ENCODE measurements at regions of chr19 and their contacts with region 1.

Region 1: GRCh38 chr19:5904352-5905113 is at the start of gene VMAC:
- DNase-seq: peak; percentile 99 to 100
- ATAC-seq: peak; percentile 73 to 89 (median 77)
- H3K4me3 ChIP-seq: peak within 1 kb of the TSS; percentile 97
- H3K4me3 Mint-ChIP-seq: peak within 1 kb of the TSS; percentile 100
- H3K27ac ChIP-seq: peak within 1 kb of the TSS; percentile 93
- H3K27ac Mint-ChIP-seq: peak within 1 kb of the TSS; percentile 98 to 99
- H3K4me1 ChIP-seq: peaks cover 35% of the 10 kb centered on the region
- H3K4me1 Mint-ChIP-seq: peaks cover 23 to 42% of the 10 kb centered on the region in 2 donors
- H3K27me3 ChIP-seq: no peaks in the 10 kb centered on the region
- H3K27me3 Mint-ChIP-seq: no peaks in the 10 kb centered on the region
- CTCF ChIP-seq: no peak
- total RNA-seq, gene VMAC: 21.1 to 26.3 (median 24.2) TPM

Region 2: GRCh38 chr19:4723367-4724187 is 1181.0 kb before region 1 on chr19 and contains the start of gene DPP9:
- intact Hi-C with region 1: loop called (anchors 5 kb)
- DNase-seq: peak; percentile 91 to 99
- ATAC-seq: peak; percentile 94 to 99 (median 94)
- H3K4me3 ChIP-seq: peak within 1 kb of the TSS; percentile 98
- H3K4me3 Mint-ChIP-seq: peak within 1 kb of the TSS; percentile 95
- H3K27ac ChIP-seq: peak within 1 kb of the TSS; percentile 77
- H3K27ac Mint-ChIP-seq: peak within 1 kb of the TSS; percentile 98
- H3K4me1 ChIP-seq: peaks cover 34% of the 10 kb centered on the region
- H3K4me1 Mint-ChIP-seq: peaks cover 32 to 55% of the 10 kb centered on the region in 2 donors
- H3K27me3 ChIP-seq: no peaks in the 10 kb centered on the region
- H3K27me3 Mint-ChIP-seq: peaks cover 0 to 3% of the 10 kb centered on the region in 2 donors
- CTCF ChIP-seq: no peak
- total RNA-seq, gene DPP9: 133 to 183 (median 165) TPM

Region 3: DNA sequence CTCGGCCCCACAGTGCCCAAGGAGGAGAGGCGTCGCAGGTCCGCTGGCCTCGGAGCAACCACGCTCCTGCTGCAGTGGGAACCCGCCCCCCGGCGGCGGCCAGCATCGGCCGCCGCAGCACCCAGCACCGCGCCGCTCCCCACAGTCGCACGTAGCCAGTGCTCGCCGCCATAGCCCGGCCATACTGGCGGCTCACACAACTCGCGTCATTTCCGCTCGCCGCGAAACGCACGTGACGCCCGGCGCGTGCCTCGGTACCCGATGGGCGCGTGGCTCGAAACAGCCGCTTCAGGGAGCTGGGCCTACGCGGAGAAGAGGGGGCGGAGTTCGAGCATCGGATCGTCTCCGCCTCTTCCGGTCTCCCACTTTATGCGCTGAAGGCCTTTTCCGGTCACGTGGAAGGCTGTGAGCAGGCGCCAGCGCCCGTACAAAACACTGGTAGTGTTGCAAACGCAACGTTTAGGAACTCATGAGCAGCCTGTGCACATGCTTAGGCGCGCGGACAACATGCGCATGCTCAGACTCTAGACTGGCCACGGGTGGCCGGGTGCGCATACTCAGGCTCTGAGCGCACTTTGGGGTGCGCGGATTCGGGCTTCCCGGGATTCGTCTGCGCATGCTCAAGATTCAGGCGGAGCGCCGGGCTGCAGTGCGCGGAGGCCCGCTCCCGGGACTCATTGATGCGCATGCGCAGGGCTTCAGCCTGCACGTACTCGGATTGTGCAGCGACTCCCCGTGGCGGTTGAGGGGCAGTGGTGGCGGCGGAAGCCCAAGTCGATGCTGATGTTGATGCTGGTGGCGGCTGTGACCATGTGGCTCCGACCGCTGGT is 184.4 kb before region 1 on chr19 and contains the starts of genes CATSPERD and LONP1:
- intact Hi-C with region 1: loop called (anchors 1 kb)
- DNase-seq: peak; percentile 96 to 100
- ATAC-seq: peak; percentile 87 to 96 (median 87)
- H3K4me3 ChIP-seq: peak within 1 kb of the TSS; percentile 68
- H3K4me3 Mint-ChIP-seq: peak within 1 kb of the TSS; percentile 89
- H3K27ac ChIP-seq: peak within 1 kb of the TSS; percentile 82
- H3K27ac Mint-ChIP-seq: peak within 1 kb of the TSS; percentile 92 to 95
- H3K4me1 ChIP-seq: peaks cover 31% of the 10 kb centered on the region
- H3K4me1 Mint-ChIP-seq: peaks cover 10 to 23% of the 10 kb centered on the region in 2 donors
- H3K27me3 ChIP-seq: no peaks in the 10 kb centered on the region
- H3K27me3 Mint-ChIP-seq: peaks cover 0 to 2% of the 10 kb centered on the region in 2 donors
- CTCF ChIP-seq: peak; percentile 67
- total RNA-seq, gene CATSPERD: not detected
- total RNA-seq, gene LONP1: 50.5 to 61.8 (median 56.1) TPM

Region 4: GRCh38 chr19:5790573-5791520 is 113.7 kb before region 1 on chr19 and contains the start of gene DUS3L:
- intact Hi-C with region 1: loop called (anchors 1 kb)
- DNase-seq: peak; percentile 95 to 98
- ATAC-seq: peak; percentile 90 to 98 (median 92)
- H3K4me3 ChIP-seq: peak within 1 kb of the TSS; percentile 96
- H3K4me3 Mint-ChIP-seq: peak within 1 kb of the TSS; percentile 100
- H3K27ac ChIP-seq: peak within 1 kb of the TSS; percentile 99
- H3K27ac Mint-ChIP-seq: peak within 1 kb of the TSS; percentile 100
- H3K4me1 ChIP-seq: peaks cover 18% of the 10 kb centered on the region
- H3K4me1 Mint-ChIP-seq: peaks cover 14 to 22% of the 10 kb centered on the region in 2 donors
- H3K27me3 ChIP-seq: no peaks in the 10 kb centered on the region
- H3K27me3 Mint-ChIP-seq: peaks cover 0 to 3% of the 10 kb centered on the region in 2 donors
- CTCF ChIP-seq: no peak
- total RNA-seq, gene DUS3L: 116 to 140 (median 128) TPM

Region 5: GRCh38 chr19:5803752-5804515 is 100.6 kb before region 1 on chr19:
- intact Hi-C with region 1: loop called (anchors 1 kb)
- DNase-seq: peak; percentile 85 to 96
- ATAC-seq: peak; percentile 92 to 95 (median 94)
- H3K4me3 ChIP-seq: no peak overlapping the region
- H3K4me3 Mint-ChIP-seq: peak overlapping the region; percentile 78
- H3K27ac ChIP-seq: no peak overlapping the region
- H3K27ac Mint-ChIP-seq: peak overlapping the region; percentile 74 to 91
- H3K4me1 ChIP-seq: peaks cover 27% of the 10 kb centered on the region
- H3K4me1 Mint-ChIP-seq: peaks cover 12 to 19% of the 10 kb centered on the region in 2 donors
- H3K27me3 ChIP-seq: peaks cover 39% of the 10 kb centered on the region
- H3K27me3 Mint-ChIP-seq: peaks cover 7 to 50% of the 10 kb centered on the region in 2 donors
- CTCF ChIP-seq: peak; percentile 87

Region 6: DNA sequence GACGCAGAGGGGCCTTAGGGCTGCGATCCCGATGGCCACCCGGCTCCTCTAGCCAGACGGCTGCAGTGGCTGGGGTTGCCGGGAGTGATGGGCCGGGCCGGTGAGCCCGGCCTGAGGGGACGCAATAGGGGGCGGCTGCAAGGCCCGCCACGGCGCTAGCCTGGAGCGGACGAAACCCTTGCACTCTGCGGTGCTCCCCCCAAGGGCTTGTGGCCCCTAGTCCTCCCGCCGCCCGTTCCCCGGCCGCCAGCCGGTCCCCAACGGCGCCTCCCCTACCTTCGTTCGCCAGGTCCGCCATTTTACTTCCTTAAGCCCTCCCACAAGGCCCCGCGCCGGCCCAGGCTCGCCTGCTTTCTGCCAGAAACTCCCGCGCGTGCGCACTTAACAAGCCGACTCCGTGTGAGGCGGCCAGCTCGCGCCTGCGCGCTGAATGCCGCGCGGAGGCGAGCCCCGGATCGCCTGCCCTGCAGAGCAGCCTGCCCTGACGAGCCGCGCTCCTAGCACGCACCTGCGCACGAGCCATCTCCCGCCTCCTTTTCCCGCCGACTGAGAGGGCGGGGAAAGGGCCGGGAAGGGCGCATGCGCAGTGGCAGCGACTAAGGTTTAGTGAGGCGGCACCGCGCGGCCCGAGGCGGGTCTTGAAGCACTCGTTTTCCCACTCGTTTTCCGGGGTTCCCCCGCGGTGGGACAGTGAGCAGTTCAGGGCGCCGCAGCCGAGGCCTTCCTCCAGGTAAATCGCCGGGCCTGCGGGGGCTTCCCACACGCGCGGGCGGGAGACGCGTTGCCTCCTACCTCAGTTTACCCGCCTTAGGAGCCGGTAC is 73.5 kb after region 1 on chr19 and contains the start of gene RANBP3:
- intact Hi-C with region 1: loop called (anchors 5 kb)
- DNase-seq: peak; percentile 95 to 100
- ATAC-seq: peak; percentile 90 to 96 (median 91)
- H3K4me3 ChIP-seq: peak within 1 kb of the TSS; percentile 53
- H3K4me3 Mint-ChIP-seq: peak within 1 kb of the TSS; percentile 99
- H3K27ac ChIP-seq: peak within 1 kb of the TSS; percentile 64
- H3K27ac Mint-ChIP-seq: peak within 1 kb of the TSS; percentile 92 to 98
- H3K4me1 ChIP-seq: peaks cover 34% of the 10 kb centered on the region
- H3K4me1 Mint-ChIP-seq: peaks cover 47 to 50% of the 10 kb centered on the region in 2 donors
- H3K27me3 ChIP-seq: no peaks in the 10 kb centered on the region
- H3K27me3 Mint-ChIP-seq: no peaks in the 10 kb centered on the region
- CTCF ChIP-seq: no peak
- total RNA-seq, gene RANBP3: 73.9 to 95.2 (median 89.7) TPM

Region 7: GRCh38 chr19:6325614-6326013 is 421.1 kb after region 1 on chr19:
- intact Hi-C with region 1: no loop called
- DNase-seq: no peak
- ATAC-seq: no peak
- H3K4me3 ChIP-seq: no peak overlapping the region
- H3K4me3 Mint-ChIP-seq: no peak overlapping the region
- H3K27ac ChIP-seq: no peak overlapping the region
- H3K27ac Mint-ChIP-seq: no peak overlapping the region
- H3K4me1 ChIP-seq: no peaks in the 10 kb centered on the region
- H3K4me1 Mint-ChIP-seq: no peaks in the 10 kb centered on the region
- H3K27me3 ChIP-seq: no peaks in the 10 kb centered on the region
- H3K27me3 Mint-ChIP-seq: peaks cover 7 to 12% of the 10 kb centered on the region in 2 donors
- CTCF ChIP-seq: no peak

Region 8: GRCh38 chr19:6372594-6373095 is 468.1 kb after region 1 on chr19 and contains the start of gene ALKBH7:
- intact Hi-C with region 1: loop called (anchors 2 kb)
- DNase-seq: peak; percentile 92 to 100
- ATAC-seq: peak; percentile 77 to 89 (median 80)
- H3K4me3 ChIP-seq: peak within 1 kb of the TSS; percentile 79
- H3K4me3 Mint-ChIP-seq: peak within 1 kb of the TSS; percentile 91
- H3K27ac ChIP-seq: peak within 1 kb of the TSS; percentile 97
- H3K27ac Mint-ChIP-seq: peak within 1 kb of the TSS; percentile 88 to 97
- H3K4me1 ChIP-seq: peaks cover 15% of the 10 kb centered on the region
- H3K4me1 Mint-ChIP-seq: peaks cover 15 to 25% of the 10 kb centered on the region in 2 donors
- H3K27me3 ChIP-seq: no peaks in the 10 kb centered on the region
- H3K27me3 Mint-ChIP-seq: no peaks in the 10 kb centered on the region
- CTCF ChIP-seq: no peak
- total RNA-seq, gene ALKBH7: 23.7 to 30.4 (median 25.9) TPM